Endothelial cell of umbilical vein (primary cell): ENCODE measurements at regions of chr4 and their contacts with region 1.

Region 1: DNA sequence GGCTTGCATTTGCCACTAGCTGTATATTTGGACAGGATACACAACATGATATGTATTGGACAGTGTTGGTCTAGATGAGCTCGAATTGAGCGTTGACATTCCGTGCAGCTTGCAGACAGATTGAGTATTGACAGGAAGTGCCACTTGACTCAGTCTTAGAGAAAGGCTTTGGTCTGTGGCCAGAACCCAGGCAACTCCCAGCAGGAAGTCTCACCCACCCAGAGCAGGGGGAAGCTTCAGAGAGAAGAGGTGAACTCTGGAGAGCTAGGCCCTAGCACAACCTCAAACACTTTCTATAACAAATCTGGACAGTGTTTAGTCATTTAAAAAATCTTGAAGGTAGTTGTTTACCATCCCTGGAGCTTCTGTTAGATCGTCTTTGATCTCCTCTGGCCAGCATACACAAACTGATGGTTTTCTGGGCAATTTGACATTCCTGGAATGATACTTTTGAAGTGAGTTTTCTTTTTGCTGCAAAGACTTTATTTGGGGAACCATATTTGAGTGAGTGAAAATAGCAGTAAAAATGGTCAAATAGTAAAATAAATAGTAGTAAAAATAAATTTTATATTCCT is 280.4 kb downstream of the FBXW7 start:
- DNase-seq: peak; percentile 83
- H3K4me3 ChIP-seq: no peak overlapping the region
- H3K27ac ChIP-seq: peak overlapping the region; percentile 40
- H3K4me1 ChIP-seq: peaks cover 47% of the 10 kb centered on the region
- H3K27me3 ChIP-seq: no peaks in the 10 kb centered on the region
- CTCF ChIP-seq: no peak
- POLR2A ChIP-seq: no peak

Region 2: GRCh38 chr4:151917145-151917734 is 338.3 kb before region 1 on chr4:
- CTCF ChIA-PET with region 1: no interaction called
- POLR2A ChIA-PET with region 1: no interaction called
- dilution Hi-C with region 1: no loop called
- intact Hi-C with region 1: no loop called
- DNase-seq: no peak
- H3K4me3 ChIP-seq: no peak overlapping the region
- H3K27ac ChIP-seq: no peak overlapping the region
- H3K4me1 ChIP-seq: no peaks in the 10 kb centered on the region
- H3K27me3 ChIP-seq: no peaks in the 10 kb centered on the region
- CTCF ChIP-seq: no peak
- POLR2A ChIP-seq: no peak

Region 3: GRCh38 chr4:152106113-152106763 is 149.3 kb before region 1 on chr4:
- CTCF ChIA-PET with region 1: no interaction called
- POLR2A ChIA-PET with region 1: no interaction called
- dilution Hi-C with region 1: no loop called
- intact Hi-C with region 1: loop called (anchors 1 kb)
- DNase-seq: peak; percentile 96
- H3K4me3 ChIP-seq: no peak overlapping the region
- H3K27ac ChIP-seq: peak overlapping the region; percentile 82
- H3K4me1 ChIP-seq: peaks cover 16% of the 10 kb centered on the region
- H3K27me3 ChIP-seq: no peaks in the 10 kb centered on the region
- CTCF ChIP-seq: no peak
- POLR2A ChIP-seq: no peak

Region 4: DNA sequence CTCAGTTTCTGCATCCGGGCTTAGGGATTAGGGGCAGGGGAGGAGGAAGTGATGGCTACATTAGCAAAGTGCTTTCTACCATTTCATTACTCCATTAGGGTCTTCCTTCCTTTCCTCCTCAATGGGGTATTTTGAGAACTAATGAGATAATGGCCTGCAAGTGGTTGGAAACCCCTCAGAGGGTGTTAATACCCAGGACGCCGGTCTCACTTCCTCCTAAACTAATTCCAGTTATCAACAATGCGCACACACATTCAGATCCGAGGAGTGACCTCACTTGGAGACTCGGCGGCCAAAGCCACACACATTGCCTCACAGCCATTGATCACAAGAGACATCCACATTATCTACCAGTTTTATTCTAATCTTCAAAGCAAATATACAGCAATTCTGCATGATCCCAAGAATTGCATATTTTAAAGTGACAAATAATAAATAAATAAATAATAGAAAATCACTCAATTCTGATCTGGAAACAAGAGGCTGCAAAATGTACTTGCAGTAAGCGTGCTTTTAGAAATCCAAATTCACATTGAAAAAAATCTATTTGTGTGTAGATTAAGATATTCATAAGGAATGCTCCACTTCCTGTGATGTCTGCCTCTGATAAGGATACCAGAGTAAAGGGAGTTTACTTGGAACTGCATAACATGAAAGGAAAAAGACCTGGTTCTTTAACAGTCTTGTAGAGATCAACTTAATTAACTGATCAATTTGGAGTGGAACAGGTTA is 48.7 kb before region 1 on chr4:
- CTCF ChIA-PET with region 1: no interaction called
- POLR2A ChIA-PET with region 1: no interaction called
- dilution Hi-C with region 1: no loop called
- intact Hi-C with region 1: loop called (anchors 2 kb)
- DNase-seq: peak; percentile 65
- H3K4me3 ChIP-seq: no peak overlapping the region
- H3K27ac ChIP-seq: peak overlapping the region; percentile 32
- H3K4me1 ChIP-seq: peaks cover 22% of the 10 kb centered on the region
- H3K27me3 ChIP-seq: no peaks in the 10 kb centered on the region
- CTCF ChIP-seq: no peak
- POLR2A ChIP-seq: no peak

Region 5: DNA sequence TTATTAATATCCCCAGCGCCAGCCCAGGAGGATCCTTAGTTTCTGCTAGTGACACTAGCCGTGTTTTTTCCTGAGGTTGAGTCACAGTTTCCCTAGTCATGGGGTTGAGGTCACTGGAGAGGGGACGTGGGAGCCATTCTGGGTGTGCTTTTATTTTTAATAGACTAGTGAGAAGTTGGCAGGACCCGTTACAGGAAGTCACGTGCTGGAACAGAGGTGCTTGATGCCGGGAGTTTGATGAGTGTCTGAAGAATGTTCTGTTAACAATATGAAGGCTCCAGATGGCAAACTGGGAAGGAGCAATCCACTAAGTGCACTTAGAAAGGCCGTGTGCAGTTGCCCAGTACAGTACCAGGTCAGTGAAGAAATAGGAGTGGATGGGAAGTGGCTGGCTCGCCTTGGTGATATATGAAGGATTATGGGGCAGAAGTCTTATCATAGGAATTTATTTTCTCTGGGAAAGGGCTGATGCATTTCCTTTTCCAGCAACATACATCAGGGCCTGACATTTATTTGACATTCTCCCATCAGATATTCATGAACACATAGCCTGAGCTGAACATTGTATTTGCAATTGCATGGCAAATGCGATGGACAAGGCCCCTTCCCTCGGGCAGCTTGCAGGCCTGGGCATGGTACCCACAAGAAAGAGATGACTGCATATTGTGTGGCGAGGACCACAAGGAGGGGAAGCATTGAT is 11.5 kb before region 1 on chr4:
- CTCF ChIA-PET with region 1: interaction called, 8 read pairs
- POLR2A ChIA-PET with region 1: no interaction called
- dilution Hi-C with region 1: no loop called
- intact Hi-C with region 1: loop called (anchors 1 kb)
- DNase-seq: peak; percentile 98
- H3K4me3 ChIP-seq: no peak overlapping the region
- H3K27ac ChIP-seq: peak overlapping the region; percentile 78
- H3K4me1 ChIP-seq: peaks cover 27% of the 10 kb centered on the region
- H3K27me3 ChIP-seq: no peaks in the 10 kb centered on the region
- CTCF ChIP-seq: no peak
- POLR2A ChIP-seq: no peak

Region 6: GRCh38 chr4:152679414-152680281 is 424.1 kb after region 1 on chr4 and contains the start of gene TMEM154:
- CTCF ChIA-PET with region 1: no interaction called
- POLR2A ChIA-PET with region 1: no interaction called
- dilution Hi-C with region 1: no loop called
- intact Hi-C with region 1: loop called (anchors 5 kb)
- DNase-seq: peak; percentile 75
- H3K4me3 ChIP-seq: peak within 1 kb of the TSS; percentile 49 to 93 (median 83)
- H3K27ac ChIP-seq: peak within 1 kb of the TSS; percentile 85
- H3K4me1 ChIP-seq: peaks cover 44% of the 10 kb centered on the region
- H3K27me3 ChIP-seq: no peaks in the 10 kb centered on the region
- CTCF ChIP-seq: no peak
- POLR2A ChIP-seq: peak; percentile 84
- total RNA-seq, gene TMEM154: 43.6 and 50.0 TPM in 2 replicates